ENCODE measurements at regions of chr5 and their contacts with region 1.

Region 1: GRCh38 chr5:170791325-170791954 is 7.9 kb downstream of the GABRP start:
- DNase-seq: peak; percentile 82
- ATAC-seq: peak; percentile 82

Region 2: GRCh38 chr5:170747851-170748250 is 43.6 kb before region 1 on chr5:
- intact Hi-C with region 1: loop called (anchors 5 kb)
- DNase-seq: no peak
- ATAC-seq: no peak

Region 3: DNA sequence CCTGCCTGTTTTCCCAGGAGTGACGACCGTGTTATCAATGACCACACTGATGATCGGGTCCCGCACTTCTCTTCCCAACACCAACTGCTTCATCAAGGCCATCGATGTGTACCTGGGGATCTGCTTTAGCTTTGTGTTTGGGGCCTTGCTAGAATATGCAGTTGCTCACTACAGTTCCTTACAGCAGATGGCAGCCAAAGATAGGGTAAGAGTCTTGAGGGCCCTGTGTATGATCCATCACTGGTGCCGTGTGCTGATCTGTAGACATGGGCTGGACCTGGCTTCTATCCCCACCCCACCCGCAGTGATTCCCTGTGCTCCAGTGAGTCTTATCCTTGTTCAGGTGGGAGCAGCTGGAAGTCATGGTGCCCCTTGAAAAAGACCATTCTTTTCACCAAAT is 18.1 kb after region 1 on chr5:
- intact Hi-C with region 1: no loop called
- DNase-seq: no peak
- ATAC-seq: no peak